PC-9 (cell line): ENCODE measurements at regions of chr7 and their contacts with region 1.

Region 1: GRCh38 chr7:138008547-138009349 is 6.9 kb upstream of the CREB3L2 start:
- DNase-seq: peak; percentile 26 to 61
- H3K4me3 ChIP-seq: no peak overlapping the region
- H3K27ac ChIP-seq: no peak overlapping the region
- H3K4me1 ChIP-seq: no peaks in the 10 kb centered on the region
- H3K27me3 ChIP-seq: no peaks in the 10 kb centered on the region
- CTCF ChIP-seq: peak; percentile 96

Region 2: GRCh38 chr7:137606061-137606674 is 402.6 kb before region 1 on chr7:
- CTCF ChIA-PET with region 1: no interaction called
- POLR2A ChIA-PET with region 1: no interaction called
- intact Hi-C with region 1: loop called (anchors 1 kb)
- DNase-seq: peak in 1 of 2 experiments; percentile 59
- H3K4me3 ChIP-seq: no peak overlapping the region
- H3K27ac ChIP-seq: no peak overlapping the region
- H3K4me1 ChIP-seq: no peaks in the 10 kb centered on the region
- H3K27me3 ChIP-seq: peaks cover 33% of the 10 kb centered on the region
- CTCF ChIP-seq: peak; percentile 83

Region 3: DNA sequence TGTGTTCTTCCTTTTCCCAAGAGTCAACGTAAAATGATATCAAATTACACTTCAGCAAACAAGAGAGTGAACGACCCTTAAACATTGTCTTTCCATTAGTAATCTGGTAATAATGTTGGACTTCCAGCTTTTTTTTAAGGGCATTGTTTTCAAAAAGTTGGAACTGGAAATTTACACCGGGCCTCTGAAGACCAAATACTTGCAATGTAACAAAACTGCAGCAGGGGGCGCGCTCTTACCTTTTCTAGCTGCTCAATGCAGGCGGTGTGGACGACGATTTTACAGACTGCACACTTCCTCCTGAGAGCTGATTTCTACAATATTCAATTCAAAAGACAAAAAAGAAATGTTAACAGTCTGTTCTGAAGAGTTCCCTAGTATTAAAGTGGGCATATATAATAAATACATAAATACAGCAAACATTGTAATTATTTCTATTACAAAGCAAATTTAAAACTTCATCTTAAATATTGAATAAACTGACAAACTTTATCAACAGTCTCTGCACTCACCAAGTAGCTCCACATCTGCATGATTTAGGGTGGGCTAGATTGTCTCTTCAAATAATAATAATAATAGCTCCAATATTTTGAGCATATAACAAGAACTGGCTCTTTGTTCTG is 352.4 kb before region 1 on chr7:
- CTCF ChIA-PET with region 1: no interaction called
- POLR2A ChIA-PET with region 1: no interaction called
- intact Hi-C with region 1: loop called (anchors 1 kb)
- DNase-seq: peak in 1 of 2 experiments; percentile 75
- H3K4me3 ChIP-seq: no peak overlapping the region
- H3K27ac ChIP-seq: no peak overlapping the region
- H3K4me1 ChIP-seq: no peaks in the 10 kb centered on the region
- H3K27me3 ChIP-seq: peaks cover 57% of the 10 kb centered on the region
- CTCF ChIP-seq: peak; percentile 95

Region 4: GRCh38 chr7:137933270-137934017 is 75.3 kb before region 1 on chr7:
- CTCF ChIA-PET with region 1: no interaction called
- POLR2A ChIA-PET with region 1: no interaction called
- intact Hi-C with region 1: no loop called
- DNase-seq: no peak
- H3K4me3 ChIP-seq: no peak overlapping the region
- H3K27ac ChIP-seq: no peak overlapping the region
- H3K4me1 ChIP-seq: peaks cover 28% of the 10 kb centered on the region
- H3K27me3 ChIP-seq: no peaks in the 10 kb centered on the region
- CTCF ChIP-seq: no peak

Region 5: GRCh38 chr7:138089080-138089991 is 80.6 kb after region 1 on chr7:
- CTCF ChIA-PET with region 1: interaction called, 15 read pairs
- POLR2A ChIA-PET with region 1: no interaction called
- intact Hi-C with region 1: no loop called
- DNase-seq: peak in 1 of 2 experiments; percentile 94
- H3K4me3 ChIP-seq: peak overlapping the region; percentile 16; the same call in 1 of the 2 replicates
- H3K27ac ChIP-seq: peak overlapping the region; percentile 95
- H3K4me1 ChIP-seq: peaks cover 44% of the 10 kb centered on the region
- H3K27me3 ChIP-seq: no peaks in the 10 kb centered on the region
- CTCF ChIP-seq: no peak

Region 6: DNA sequence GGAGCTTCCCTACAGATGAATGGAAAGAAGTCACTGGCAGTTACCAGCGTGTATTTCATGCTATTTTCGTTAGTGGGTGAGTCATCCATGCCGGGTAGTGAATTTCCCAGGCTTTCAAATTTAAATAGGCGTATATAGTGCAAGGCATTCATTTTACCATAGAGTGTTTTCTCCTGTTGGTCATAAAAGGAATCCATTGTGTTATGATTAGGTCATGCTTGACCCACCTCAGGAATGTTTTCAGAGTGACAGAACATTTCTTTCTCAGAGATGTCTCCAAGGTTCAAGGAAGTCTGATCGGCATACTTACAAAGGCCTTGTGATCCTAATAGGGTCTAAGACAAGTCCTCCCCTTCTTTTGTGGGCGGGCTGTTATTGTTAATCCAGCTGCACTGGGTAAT is 178.2 kb after region 1 on chr7:
- CTCF ChIA-PET with region 1: no interaction called
- POLR2A ChIA-PET with region 1: no interaction called
- intact Hi-C with region 1: no loop called
- DNase-seq: peak; percentile 21 to 47
- H3K4me3 ChIP-seq: no peak overlapping the region
- H3K27ac ChIP-seq: no peak overlapping the region
- H3K4me1 ChIP-seq: no peaks in the 10 kb centered on the region
- H3K27me3 ChIP-seq: no peaks in the 10 kb centered on the region
- CTCF ChIP-seq: no peak

Region 7: GRCh38 chr7:138595454-138595853 is 586.7 kb after region 1 on chr7:
- CTCF ChIA-PET with region 1: no interaction called
- POLR2A ChIA-PET with region 1: no interaction called
- intact Hi-C with region 1: no loop called
- DNase-seq: no peak
- H3K4me3 ChIP-seq: no peak overlapping the region
- H3K27ac ChIP-seq: no peak overlapping the region
- H3K4me1 ChIP-seq: no peaks in the 10 kb centered on the region
- H3K27me3 ChIP-seq: no peaks in the 10 kb centered on the region
- CTCF ChIP-seq: no peak